Left lung (tissue), 14 donors: ENCODE measurements at regions of chr11 and their contacts with region 1.

Region 1: DNA sequence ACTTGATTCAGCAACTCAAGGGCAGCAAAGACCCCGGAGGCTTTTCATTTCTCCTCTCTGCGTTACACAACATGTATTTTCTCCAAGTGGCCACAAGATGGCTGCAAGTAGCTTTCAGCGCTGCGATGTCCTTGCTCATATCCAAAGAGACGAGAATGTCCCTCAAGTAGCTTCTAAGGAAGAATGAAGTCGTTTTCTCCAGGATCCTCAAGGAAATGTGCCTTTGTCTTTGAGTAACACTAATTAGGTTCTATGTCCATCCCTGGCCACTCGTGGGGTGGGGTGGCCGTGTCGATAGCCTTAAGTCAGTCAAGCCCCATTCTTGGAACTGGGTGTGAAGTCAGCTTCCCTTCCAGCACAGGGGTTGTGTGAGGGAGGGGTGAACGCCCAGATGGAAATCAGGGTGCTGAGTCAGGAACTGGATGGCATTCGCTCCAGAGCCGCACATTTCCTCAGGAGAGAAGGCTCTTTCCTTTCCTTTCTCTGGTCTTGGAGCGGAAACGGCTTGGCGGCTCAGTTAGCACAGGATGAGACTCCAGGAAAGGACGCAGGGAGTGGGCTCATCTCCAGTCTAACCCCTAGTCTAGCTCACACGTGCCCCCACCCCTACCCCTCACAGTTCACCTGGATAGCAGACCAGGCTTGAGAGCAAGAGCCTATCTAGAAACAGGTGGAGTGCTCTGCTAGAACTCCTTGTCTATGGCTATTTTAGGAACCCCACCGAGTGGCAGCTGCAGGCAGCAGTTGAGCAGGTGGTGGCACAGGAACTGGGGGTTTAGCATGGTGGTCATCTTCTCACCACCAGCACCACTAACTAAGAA is 44.3 kb downstream of the NNMT start:
- DNase-seq: peak in 3 of 4 donors; percentile 43 to 72 (median 49)
- ATAC-seq: peak; percentile 95
- H3K4me3 ChIP-seq: peak overlapping the region in 1 of 2 donors; percentile 8
- H3K27ac ChIP-seq: peak overlapping the region; percentile 15 to 41
- H3K4me1 ChIP-seq: peaks cover 0 to 13% of the 10 kb centered on the region in 2 donors
- H3K27me3 ChIP-seq: no peaks in the 10 kb centered on the region
- CTCF ChIP-seq: peak; percentile 57 to 72

Region 2: DNA sequence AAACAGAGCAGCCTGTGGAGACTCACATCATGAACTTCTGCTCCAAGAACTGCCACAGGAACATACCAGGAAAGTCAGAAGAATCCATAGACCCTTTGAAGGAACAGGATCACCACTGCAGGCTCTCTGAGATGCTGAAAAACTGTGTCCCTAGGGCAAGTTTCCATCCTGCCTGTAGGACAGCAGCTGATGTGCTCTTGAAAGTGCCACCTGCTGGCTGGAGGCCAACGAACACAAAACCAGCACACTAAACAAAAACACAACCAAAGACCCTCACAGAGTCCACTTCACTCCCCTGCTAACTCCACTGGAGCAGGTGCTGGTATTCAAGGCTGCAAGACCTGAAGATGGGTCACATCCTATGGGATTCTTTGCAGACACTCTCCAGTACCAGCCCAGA is 231.2 kb after region 1 on chr11:
- intact Hi-C with region 1: no loop called
- DNase-seq: no peak
- ATAC-seq: no peak
- H3K4me3 ChIP-seq: no peak overlapping the region
- H3K27ac ChIP-seq: no peak overlapping the region
- H3K4me1 ChIP-seq: no peaks in the 10 kb centered on the region
- H3K27me3 ChIP-seq: no peaks in the 10 kb centered on the region
- CTCF ChIP-seq: no peak

Region 3: DNA sequence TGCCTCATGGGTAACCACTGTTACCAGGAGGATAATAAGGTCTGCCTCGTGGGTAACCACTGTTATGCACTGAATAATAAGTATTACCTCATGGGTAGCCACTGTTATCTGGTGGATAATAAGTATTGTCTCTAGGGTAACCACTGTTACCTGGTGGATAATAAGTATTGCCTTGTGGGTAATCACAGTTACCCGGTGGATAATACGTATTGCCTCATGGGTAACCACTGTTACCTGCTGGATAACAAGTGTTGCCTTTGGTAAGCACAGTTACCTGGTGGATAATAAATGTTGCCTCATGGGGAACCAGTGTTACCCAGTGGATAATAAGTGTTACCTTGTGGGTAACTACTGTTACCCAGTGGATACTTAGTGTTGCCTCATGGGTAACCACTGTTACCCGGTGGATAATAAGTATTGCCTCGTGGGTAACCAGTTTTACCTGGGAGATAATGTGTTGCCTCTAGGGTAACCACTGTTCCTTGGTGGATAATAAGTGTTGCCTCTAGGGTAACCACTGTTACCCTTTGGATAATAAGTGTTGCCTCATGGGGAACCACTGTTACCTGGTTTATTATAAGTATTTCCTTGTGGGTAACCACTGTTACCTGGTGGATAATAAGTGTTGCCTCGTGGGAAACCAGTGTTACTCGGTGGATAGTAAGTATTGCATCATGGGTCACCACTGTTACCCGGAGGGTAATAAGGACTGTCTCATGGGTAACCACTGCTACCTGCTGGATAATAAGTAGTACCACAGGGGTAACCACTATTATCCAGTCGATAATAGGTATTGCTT is 265.7 kb after region 1 on chr11:
- intact Hi-C with region 1: loop called in 1 of 2 experiments (anchors 10 kb)
- DNase-seq: no peak
- ATAC-seq: peak; percentile 29
- H3K4me3 ChIP-seq: no peak overlapping the region
- H3K27ac ChIP-seq: no peak overlapping the region
- H3K4me1 ChIP-seq: no peaks in the 10 kb centered on the region
- H3K27me3 ChIP-seq: no peaks in the 10 kb centered on the region
- CTCF ChIP-seq: no peak